Activated B cell treated with CpG ODN at 0.5 μM for 24 hours (primary cell): ENCODE measurements at regions of chr13 and their contacts with region 1.

Region 1: DNA sequence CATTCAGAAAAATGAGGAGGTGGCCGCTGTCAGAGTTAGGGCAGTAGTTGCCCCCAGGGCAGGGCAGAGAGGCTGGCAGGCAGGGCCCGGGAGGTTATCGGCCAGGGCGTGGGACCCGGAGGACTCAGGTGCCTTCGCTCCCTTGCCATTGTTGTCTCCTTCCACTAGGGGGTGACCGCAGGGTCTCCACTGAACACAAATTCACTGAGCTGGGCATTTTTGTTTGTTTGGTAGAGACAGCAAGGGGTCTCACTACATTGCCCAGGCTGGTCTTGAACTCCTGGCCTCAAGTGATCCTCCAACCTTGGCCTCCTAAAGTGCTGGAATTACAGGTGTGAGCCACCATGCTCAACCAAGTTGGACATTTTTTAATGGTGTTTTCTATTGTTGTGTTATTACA is 25.1 kb downstream of the CARS2 start:
- DNase-seq: no peak
- ATAC-seq: no peak
- H3K4me3 Mint-ChIP-seq: no peak overlapping the region
- H3K27ac Mint-ChIP-seq: peak overlapping the region; percentile 35
- H3K4me1 Mint-ChIP-seq: peaks cover 37% of the 10 kb centered on the region
- H3K27me3 Mint-ChIP-seq: no peaks in the 10 kb centered on the region
- CTCF ChIP-seq: no peak

Region 2: GRCh38 chr13:110615322-110616102 is 65.3 kb before region 1 on chr13 and contains the start of gene NAXD:
- CTCF ChIA-PET with region 1: no interaction called
- POLR2A ChIA-PET with region 1: interaction called, 19 read pairs
- intact Hi-C with region 1: loop called (anchors 1 kb)
- DNase-seq: peak; percentile 66
- ATAC-seq: peak; percentile 82
- H3K4me3 Mint-ChIP-seq: peak within 1 kb of the TSS; percentile 94
- H3K27ac Mint-ChIP-seq: peak within 1 kb of the TSS; percentile 89
- H3K4me1 Mint-ChIP-seq: peaks cover 37% of the 10 kb centered on the region
- H3K27me3 Mint-ChIP-seq: no peaks in the 10 kb centered on the region
- CTCF ChIP-seq: no peak
- total RNA-seq, gene NAXD: 31.1 and 32.7 TPM in 2 replicates

Region 3: DNA sequence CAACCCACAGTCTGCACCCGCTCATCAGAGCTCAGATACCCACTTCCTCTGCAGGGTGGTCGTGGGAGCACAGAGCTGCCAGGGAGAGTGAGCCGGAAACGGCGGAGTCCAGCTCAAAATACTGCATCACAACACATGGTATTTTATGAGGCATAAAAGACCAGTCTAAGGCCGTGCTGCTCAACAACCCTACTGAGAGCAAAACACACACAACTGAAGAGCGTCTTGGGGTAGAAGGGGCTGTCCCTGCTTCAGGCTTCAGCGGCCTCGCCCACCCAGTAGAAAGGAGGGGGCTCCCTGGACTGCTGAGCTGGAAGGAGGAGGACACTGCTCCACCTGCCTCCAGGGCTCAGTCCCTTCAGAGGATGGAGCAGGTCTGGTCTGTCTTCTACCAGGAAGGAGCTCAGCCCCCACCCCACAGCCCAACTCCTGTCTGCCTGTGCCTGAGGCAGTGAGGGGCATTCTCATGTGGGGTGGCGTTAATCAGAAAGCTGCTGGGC is 28.6 kb before region 1 on chr13:
- CTCF ChIA-PET with region 1: interaction called, 12 read pairs
- POLR2A ChIA-PET with region 1: interaction called, 35 read pairs
- intact Hi-C with region 1: loop called (anchors 1 kb)
- DNase-seq: no peak
- ATAC-seq: peak; percentile 65
- H3K4me3 Mint-ChIP-seq: peak overlapping the region; percentile 64
- H3K27ac Mint-ChIP-seq: peak overlapping the region; percentile 76
- H3K4me1 Mint-ChIP-seq: peaks cover 71% of the 10 kb centered on the region
- H3K27me3 Mint-ChIP-seq: no peaks in the 10 kb centered on the region
- CTCF ChIP-seq: no peak

Region 4: GRCh38 chr13:110705826-110706569 is 25.1 kb after region 1 on chr13 and contains the start of gene CARS2:
- CTCF ChIA-PET with region 1: interaction called, 3 read pairs
- POLR2A ChIA-PET with region 1: interaction called, 169 read pairs
- intact Hi-C with region 1: loop called (anchors 1 kb)
- DNase-seq: peak; percentile 82
- ATAC-seq: peak; percentile 95
- H3K4me3 Mint-ChIP-seq: peak within 1 kb of the TSS; percentile 94
- H3K27ac Mint-ChIP-seq: peak within 1 kb of the TSS; percentile 92
- H3K4me1 Mint-ChIP-seq: peaks cover 42% of the 10 kb centered on the region
- H3K27me3 Mint-ChIP-seq: no peaks in the 10 kb centered on the region
- CTCF ChIP-seq: no peak
- total RNA-seq, gene CARS2: 90.1 and 115 TPM in 2 replicates

Region 5: DNA sequence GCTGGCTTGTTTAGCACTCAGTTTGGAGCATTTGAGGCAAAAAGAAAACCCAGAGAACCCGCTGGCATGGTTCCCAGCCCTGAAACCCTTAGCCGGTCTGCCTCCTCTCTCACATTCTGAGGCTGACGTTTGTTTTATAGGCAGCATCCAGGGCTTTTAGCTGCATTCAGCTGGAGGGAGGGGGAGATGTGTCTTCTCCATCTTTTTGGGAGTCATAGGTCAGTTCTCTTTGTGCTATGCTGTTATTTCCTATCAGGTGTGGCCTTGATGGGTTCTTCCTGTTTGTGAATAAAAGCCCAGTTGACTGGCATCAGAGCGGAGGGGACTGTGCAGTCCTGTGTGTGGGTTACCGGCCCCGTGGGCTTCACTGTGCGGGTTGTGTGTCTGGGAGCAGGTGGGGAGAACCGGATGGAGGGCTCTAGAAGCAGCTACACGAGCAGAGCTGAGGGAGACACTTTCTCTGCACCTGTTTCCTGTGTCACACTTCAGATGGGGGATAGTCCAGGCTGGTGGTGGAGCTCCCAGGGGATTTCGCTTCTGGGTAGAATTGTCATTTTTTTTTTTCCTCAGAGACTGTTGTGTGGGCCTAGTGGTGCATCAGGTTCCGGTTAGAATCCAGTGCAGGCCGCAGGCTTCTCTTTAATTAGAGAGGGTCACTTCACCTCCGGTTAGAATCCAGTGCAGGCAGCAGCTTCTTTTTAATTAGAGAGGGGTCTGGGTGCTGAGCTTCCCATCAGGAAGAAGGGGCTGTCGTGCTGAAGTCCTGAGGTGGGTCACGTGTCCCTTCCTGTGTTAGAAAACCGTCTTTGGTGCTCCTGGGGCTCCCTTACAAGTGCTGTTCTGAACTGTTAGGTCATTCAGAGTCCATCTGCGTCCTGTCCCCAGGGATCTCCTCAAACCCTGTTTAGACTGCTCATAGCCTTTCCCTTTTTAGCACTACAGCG is 503.9 kb after region 1 on chr13:
- CTCF ChIA-PET with region 1: no interaction called
- POLR2A ChIA-PET with region 1: interaction called, 6 read pairs
- intact Hi-C with region 1: loop called (anchors 1 kb)
- DNase-seq: peak; percentile 60
- ATAC-seq: peak; percentile 89
- H3K4me3 Mint-ChIP-seq: peak overlapping the region; percentile 80
- H3K27ac Mint-ChIP-seq: peak overlapping the region; percentile 94
- H3K4me1 Mint-ChIP-seq: peaks cover 99% of the 10 kb centered on the region
- H3K27me3 Mint-ChIP-seq: no peaks in the 10 kb centered on the region
- CTCF ChIP-seq: no peak